HepG2 (cell line): ENCODE measurements at regions of chr1 and their contacts with region 1.

Region 1: GRCh38 chr1:58546520-58547308 is at the start of gene OMA1:
- DNase-seq: peak; percentile 91
- ATAC-seq: peak; percentile 97
- H3K4me3 ChIP-seq: peak within 1 kb of the TSS; percentile 74 to 84 (median 77)
- H3K27ac ChIP-seq: peak within 1 kb of the TSS; percentile 83
- H3K4me1 ChIP-seq: peaks cover 45% of the 10 kb centered on the region
- H3K27me3 ChIP-seq: no peaks in the 10 kb centered on the region; a peak in 1 of 5 replicates
- CTCF ChIP-seq: peak; percentile 99
- EP300 ChIP-seq: no peak
- POLR2A ChIP-seq: peak; percentile 78 to 84
- RAD21 ChIP-seq: peak; percentile 96
- total RNA-seq, gene OMA1: 18.6 and 26.9 TPM in 2 replicates

Region 2: DNA sequence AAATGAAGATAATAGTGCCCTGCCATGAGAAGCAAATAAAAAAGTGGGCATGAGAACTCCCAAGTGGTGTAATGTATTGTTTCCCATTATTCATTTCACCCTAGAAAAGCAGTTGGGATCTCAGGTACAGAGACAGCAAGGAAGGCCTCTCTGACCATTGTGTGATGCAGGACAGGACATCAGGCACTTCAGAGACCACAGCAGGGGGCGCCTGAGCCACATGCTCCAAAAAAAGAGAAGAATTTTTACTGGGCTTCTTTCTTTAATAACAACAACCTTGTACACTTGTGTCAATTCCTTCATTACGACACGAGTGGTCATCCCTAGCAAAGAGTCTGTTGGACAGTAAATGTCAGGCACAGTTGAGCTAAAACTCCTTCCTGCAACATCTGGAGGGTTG is 533.5 kb before region 1 on chr1:
- CTCF ChIA-PET with region 1: no interaction called
- POLR2A ChIA-PET with region 1: no interaction called
- in situ Hi-C with region 1: no loop called
- intact Hi-C with region 1: loop called (anchors 5 kb)
- DNase-seq: peak; percentile 6
- ATAC-seq: no peak; the same call in 2 of the 3 replicates
- H3K4me3 ChIP-seq: no peak overlapping the region
- H3K27ac ChIP-seq: no peak overlapping the region
- H3K4me1 ChIP-seq: no peaks in the 10 kb centered on the region
- H3K27me3 ChIP-seq: no peaks in the 10 kb centered on the region
- CTCF ChIP-seq: peak; percentile 38
- EP300 ChIP-seq: no peak
- POLR2A ChIP-seq: no peak
- RAD21 ChIP-seq: no peak

Region 3: DNA sequence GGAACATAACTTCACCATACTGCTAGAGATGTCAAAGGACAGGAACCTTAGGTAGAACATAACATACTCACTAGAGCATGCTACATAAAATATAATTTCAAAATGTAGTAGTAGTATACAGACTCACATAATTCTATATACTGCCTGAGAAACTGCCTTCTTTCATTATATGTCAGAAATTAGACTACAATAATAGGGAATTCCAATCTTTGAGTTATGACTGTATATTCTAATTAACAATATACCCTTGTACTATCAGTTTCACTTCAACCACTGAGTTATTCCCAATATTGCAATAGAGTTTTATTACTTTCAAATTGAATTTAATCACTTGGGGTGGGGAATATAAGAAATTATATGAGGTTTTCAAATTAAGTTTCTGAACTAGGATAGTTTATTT is 44.2 kb before region 1 on chr1:
- CTCF ChIA-PET with region 1: no interaction called
- POLR2A ChIA-PET with region 1: no interaction called
- in situ Hi-C with region 1: no loop called
- intact Hi-C with region 1: no loop called
- DNase-seq: no peak
- ATAC-seq: no peak
- H3K4me3 ChIP-seq: no peak overlapping the region
- H3K27ac ChIP-seq: no peak overlapping the region
- H3K4me1 ChIP-seq: no peaks in the 10 kb centered on the region
- H3K27me3 ChIP-seq: no peaks in the 10 kb centered on the region
- CTCF ChIP-seq: no peak
- EP300 ChIP-seq: no peak
- POLR2A ChIP-seq: no peak
- RAD21 ChIP-seq: no peak

Region 4: DNA sequence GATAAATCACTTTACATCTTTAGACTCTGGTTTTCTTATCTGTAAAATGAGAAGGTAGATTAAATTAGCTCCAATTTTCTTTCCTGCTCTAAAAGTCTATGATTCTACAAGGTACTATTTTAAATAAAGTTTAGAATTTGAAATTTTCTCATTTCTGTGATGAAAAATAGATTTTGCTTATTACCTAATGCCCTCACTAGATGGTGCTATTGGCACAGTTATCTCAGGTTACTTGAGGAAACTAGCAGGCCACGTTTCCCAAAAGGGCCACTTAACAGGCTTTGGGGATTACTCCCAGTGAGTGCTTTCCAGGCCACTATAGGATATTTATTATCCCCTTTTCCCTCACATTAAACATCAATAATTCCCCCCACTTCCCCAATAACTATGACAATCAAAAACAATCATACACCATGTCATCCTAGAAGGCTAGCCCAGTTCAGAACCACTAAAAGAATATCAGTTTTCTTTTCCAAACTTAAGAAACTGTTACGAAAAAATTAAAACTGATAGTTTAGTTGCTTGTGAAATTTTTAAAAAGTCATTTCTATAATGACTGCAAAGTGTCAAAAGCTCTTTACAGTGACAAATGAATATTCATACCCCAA is 30.8 kb before region 1 on chr1:
- CTCF ChIA-PET with region 1: interaction called, 28 read pairs
- POLR2A ChIA-PET with region 1: interaction called, 4 read pairs
- in situ Hi-C with region 1: no loop called
- intact Hi-C with region 1: loop called (anchors 1 kb)
- DNase-seq: peak; percentile 72
- ATAC-seq: peak; percentile 53; the same call in 1 of the 3 replicates
- H3K4me3 ChIP-seq: no peak overlapping the region
- H3K27ac ChIP-seq: no peak overlapping the region
- H3K4me1 ChIP-seq: no peaks in the 10 kb centered on the region
- H3K27me3 ChIP-seq: no peaks in the 10 kb centered on the region
- CTCF ChIP-seq: peak; percentile 71
- EP300 ChIP-seq: no peak
- POLR2A ChIP-seq: no peak
- RAD21 ChIP-seq: peak; percentile 61; the same call in 1 of the 2 replicates

Region 5: GRCh38 chr1:58592529-58593134 is 45.9 kb after region 1 on chr1:
- CTCF ChIA-PET with region 1: no interaction called
- POLR2A ChIA-PET with region 1: no interaction called
- in situ Hi-C with region 1: no loop called
- intact Hi-C with region 1: no loop called
- DNase-seq: no peak
- ATAC-seq: no peak
- H3K4me3 ChIP-seq: no peak overlapping the region
- H3K27ac ChIP-seq: no peak overlapping the region
- H3K4me1 ChIP-seq: no peaks in the 10 kb centered on the region
- H3K27me3 ChIP-seq: peaks cover 0 to 1% of the 10 kb centered on the region in 2 experiments; a peak in 1 of 5 replicates
- CTCF ChIP-seq: no peak
- EP300 ChIP-seq: no peak
- POLR2A ChIP-seq: no peak
- RAD21 ChIP-seq: no peak

Region 6: GRCh38 chr1:58652651-58653184 is 106.0 kb after region 1 on chr1:
- CTCF ChIA-PET with region 1: no interaction called
- POLR2A ChIA-PET with region 1: interaction called, 4 read pairs
- in situ Hi-C with region 1: no loop called
- intact Hi-C with region 1: loop called (anchors 1 kb)
- DNase-seq: peak; percentile 64
- ATAC-seq: peak; percentile 93
- H3K4me3 ChIP-seq: no peak overlapping the region
- H3K27ac ChIP-seq: no peak overlapping the region
- H3K4me1 ChIP-seq: no peaks in the 10 kb centered on the region
- H3K27me3 ChIP-seq: no peaks in the 10 kb centered on the region
- CTCF ChIP-seq: peak; percentile 85
- EP300 ChIP-seq: no peak
- POLR2A ChIP-seq: no peak
- RAD21 ChIP-seq: peak; percentile 51; the same call in 1 of the 2 replicates